Sciatic nerve (tissue), 2 donors: ENCODE measurements at regions of chr4 and their contacts with region 1.

Region 1: GRCh38 chr4:12612876-12613275 is 871.3 kb downstream of the RAB28 start:
- DNase-seq: no peak
- ATAC-seq: no peak

Region 2: DNA sequence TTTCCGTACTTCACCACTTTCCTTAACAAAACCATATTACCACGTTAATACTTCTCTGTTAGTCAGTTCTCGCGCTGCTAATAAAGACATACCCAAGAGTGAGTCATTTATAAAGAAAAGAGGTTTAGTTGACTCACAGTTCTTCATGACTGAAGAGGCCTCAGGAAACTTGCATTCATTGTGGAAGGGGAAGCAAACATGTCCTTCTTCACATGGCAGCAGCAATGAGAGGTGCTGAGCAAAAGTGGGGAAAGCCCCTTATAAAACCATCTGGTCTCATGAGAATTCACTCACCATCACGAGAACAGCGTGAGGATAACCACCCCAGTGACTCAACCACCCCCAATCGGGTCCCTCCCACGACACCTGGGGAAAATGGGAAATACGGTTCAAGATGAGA is 1638.5 kb before region 1 on chr4:
- intact Hi-C with region 1: loop called (anchors 5 kb)
- DNase-seq: no peak
- ATAC-seq: no peak

Region 3: DNA sequence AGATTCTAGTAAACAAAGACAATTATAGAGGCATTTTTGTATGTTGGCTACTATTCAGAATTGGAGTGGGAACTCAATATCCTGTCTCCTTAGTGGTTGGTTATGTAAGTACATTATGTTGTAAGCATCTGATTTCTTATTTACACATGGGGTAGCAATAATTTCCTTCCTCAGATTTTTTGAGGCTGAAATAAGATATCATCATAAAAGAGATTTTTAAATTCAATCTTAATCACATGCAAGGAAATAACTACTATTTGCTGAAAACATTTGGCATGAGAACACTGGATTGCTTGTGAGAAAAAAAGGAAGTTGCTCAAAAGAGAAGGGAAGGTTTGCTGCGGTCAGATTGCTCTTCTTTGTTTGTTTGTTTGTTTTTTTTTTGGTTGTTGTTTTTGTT is 746.5 kb before region 1 on chr4:
- intact Hi-C with region 1: no loop called
- DNase-seq: no peak
- ATAC-seq: no peak

Region 4: DNA sequence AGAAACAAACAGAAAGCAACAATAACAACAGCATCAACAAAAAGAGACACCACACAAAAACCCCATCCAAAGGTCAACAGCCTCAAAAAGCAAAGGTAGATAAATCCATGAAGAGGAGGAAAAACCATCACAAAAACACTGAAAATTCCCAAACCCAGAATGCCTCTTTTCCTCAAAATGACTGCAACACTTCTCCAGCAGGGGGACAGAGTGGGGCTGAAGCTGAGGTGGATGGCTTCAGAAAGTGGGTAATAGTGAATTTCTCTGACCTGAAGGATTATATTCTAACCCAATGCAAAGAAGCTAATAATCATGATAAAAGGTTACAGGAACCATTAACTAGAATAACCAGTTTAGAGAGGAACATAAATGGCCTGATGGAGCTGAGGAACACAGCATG is 16.9 kb before region 1 on chr4:
- intact Hi-C with region 1: no loop called
- DNase-seq: no peak
- ATAC-seq: no peak